H1 (cell line): ENCODE measurements at regions of chr2 and their contacts with region 1.

Region 1: GRCh38 chr2:227347117-227347516 is 22.1 kb downstream of the MFF start:
- DNase-seq: no peak
- H3K4me3 ChIP-seq: no peak overlapping the region
- H3K27ac ChIP-seq: no peak overlapping the region
- H3K4me1 ChIP-seq: no peaks in the 10 kb centered on the region; a peak in 1 of 7 replicates
- H3K27me3 ChIP-seq: no peaks in the 10 kb centered on the region
- CTCF ChIP-seq: peak in 2 of 3 experiments; percentile 37 to 47; a peak in 2 of 4 replicates
- EP300 ChIP-seq: no peak
- POLR2A ChIP-seq: no peak
- RAD21 ChIP-seq: peak; percentile 4 to 27; a peak in 1 of 4 replicates

Region 2: DNA sequence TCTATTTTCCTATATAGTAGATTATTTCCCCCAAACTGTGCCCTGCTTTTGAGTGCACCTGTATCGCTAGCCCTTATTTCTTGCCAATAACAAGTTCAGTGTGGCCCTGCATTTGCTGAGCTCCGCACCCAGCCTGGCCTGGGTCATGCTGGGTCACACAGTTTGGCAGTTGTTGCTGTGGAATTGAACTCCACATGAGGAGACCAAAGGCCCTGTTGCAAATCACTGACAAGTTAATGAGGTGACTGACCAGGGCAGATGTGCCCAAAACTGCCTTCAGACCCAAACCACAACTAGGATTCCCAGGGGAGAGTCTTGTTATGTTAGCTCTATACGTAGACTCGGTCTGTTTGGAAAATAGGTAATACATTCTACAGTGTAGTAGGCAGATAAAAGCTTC is 214.1 kb before region 1 on chr2:
- CTCF ChIA-PET with region 1: interaction called, 13 read pairs
- POLR2A ChIA-PET with region 1: no interaction called
- DNase-seq: no peak
- H3K4me3 ChIP-seq: no peak overlapping the region
- H3K27ac ChIP-seq: no peak overlapping the region
- H3K4me1 ChIP-seq: no peaks in the 10 kb centered on the region
- H3K27me3 ChIP-seq: no peaks in the 10 kb centered on the region
- CTCF ChIP-seq: no peak
- EP300 ChIP-seq: no peak
- POLR2A ChIP-seq: no peak
- RAD21 ChIP-seq: no peak

Region 3: GRCh38 chr2:227335713-227336112 is 11.4 kb before region 1 on chr2:
- CTCF ChIA-PET with region 1: interaction called, 14 read pairs
- POLR2A ChIA-PET with region 1: interaction called, 4 read pairs
- DNase-seq: no peak
- H3K4me3 ChIP-seq: no peak overlapping the region
- H3K27ac ChIP-seq: no peak overlapping the region
- H3K4me1 ChIP-seq: no peaks in the 10 kb centered on the region
- H3K27me3 ChIP-seq: no peaks in the 10 kb centered on the region
- CTCF ChIP-seq: no peak
- EP300 ChIP-seq: no peak
- POLR2A ChIP-seq: no peak
- RAD21 ChIP-seq: no peak

Region 4: GRCh38 chr2:227374158-227374557 is 27.0 kb after region 1 on chr2:
- CTCF ChIA-PET with region 1: interaction called, 13 read pairs
- POLR2A ChIA-PET with region 1: no interaction called
- DNase-seq: no peak
- H3K4me3 ChIP-seq: no peak overlapping the region
- H3K27ac ChIP-seq: no peak overlapping the region
- H3K4me1 ChIP-seq: peaks cover 0 to 6% (median 0%) of the 10 kb centered on the region in 4 experiments; a peak in 1 of 7 replicates
- H3K27me3 ChIP-seq: peaks cover 0 to 2% (median 0%) of the 10 kb centered on the region in 4 experiments; a peak in 1 of 7 replicates
- CTCF ChIP-seq: no peak
- EP300 ChIP-seq: no peak
- POLR2A ChIP-seq: no peak
- RAD21 ChIP-seq: no peak